Activated T-helper 2 cell treated with anti-CD3 and anti-CD28 coated beads, Interferon-gamma antibody, Interleukin-2, Interleukin-4, amounts not matched to agents 10 μg/mL and 5 μg/mL and 100 μg/mL, durations not matched to agents 14 hours and 24 hours and 36 hours (primary cell): ENCODE measurements at regions of chrX and their contacts with region 1.

Region 1: GRCh38 chrX:72238721-72239475 is at the start of gene ERCC6L:
- DNase-seq: peak; percentile 81
- H3K4me3 Mint-ChIP-seq: peak within 1 kb of the TSS; percentile 84
- H3K27ac Mint-ChIP-seq: peak within 1 kb of the TSS; percentile 60
- H3K4me1 Mint-ChIP-seq: peaks cover 19% of the 10 kb centered on the region
- H3K27me3 Mint-ChIP-seq: no peaks in the 10 kb centered on the region
- total RNA-seq, gene ERCC6L: 9.1 and 9.6 TPM in 2 replicates

Region 2: DNA sequence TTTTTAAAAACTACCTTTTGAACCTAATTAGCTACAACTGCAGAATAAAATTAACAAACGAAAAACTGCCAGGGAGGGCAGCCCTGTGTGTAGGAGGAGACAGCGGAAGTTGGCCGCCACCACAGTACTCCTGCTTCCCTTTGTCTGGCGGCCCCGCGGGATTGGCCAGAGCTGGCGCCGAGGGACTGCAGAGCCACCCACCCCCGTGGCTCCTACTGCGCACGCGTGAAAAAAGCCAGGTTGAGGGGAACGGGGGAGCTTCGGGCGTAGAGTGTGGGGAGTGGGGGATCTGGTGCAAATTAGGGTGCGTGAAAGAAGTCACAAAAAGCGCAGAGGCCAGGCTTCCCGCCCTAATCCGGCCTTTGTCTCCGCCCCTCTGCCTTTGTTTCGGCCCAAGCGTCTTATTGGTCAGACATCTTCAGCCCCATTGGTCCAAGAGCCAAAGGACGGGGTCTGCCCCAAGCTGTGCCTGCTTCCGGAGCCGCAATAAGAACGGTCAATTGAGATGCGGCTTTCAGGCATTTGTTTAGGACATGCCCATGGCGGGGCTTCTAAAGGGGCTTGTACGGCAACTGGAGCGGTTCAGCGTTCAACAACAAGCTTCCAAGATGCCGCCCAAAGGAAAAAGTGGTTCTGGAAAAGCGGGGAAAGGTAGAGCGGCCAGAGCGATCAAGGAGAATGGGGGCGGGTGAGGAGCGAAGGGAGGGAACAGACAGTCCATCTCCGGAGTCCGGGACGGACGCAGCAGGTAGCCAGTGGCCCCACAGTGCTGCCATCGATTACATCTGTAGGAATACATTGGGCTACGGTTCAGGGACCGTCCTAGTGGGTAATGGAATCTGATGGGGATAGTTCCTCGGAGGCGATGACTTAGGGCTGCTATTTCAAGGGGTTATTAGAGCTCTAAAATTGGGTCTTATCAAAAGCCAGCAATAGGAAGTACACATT is 57.4 kb before region 1 on chrX and contains the start of gene PIN4:
- intact Hi-C with region 1: loop called (anchors 2 kb)
- DNase-seq: peak; percentile 77
- H3K4me3 Mint-ChIP-seq: no peak within 1 kb of the TSS
- H3K27ac Mint-ChIP-seq: no peak within 1 kb of the TSS
- H3K4me1 Mint-ChIP-seq: peaks cover 2% of the 10 kb centered on the region
- H3K27me3 Mint-ChIP-seq: no peaks in the 10 kb centered on the region
- total RNA-seq, gene PIN4: 13.5 and 16.8 TPM in 2 replicates

Region 3: DNA sequence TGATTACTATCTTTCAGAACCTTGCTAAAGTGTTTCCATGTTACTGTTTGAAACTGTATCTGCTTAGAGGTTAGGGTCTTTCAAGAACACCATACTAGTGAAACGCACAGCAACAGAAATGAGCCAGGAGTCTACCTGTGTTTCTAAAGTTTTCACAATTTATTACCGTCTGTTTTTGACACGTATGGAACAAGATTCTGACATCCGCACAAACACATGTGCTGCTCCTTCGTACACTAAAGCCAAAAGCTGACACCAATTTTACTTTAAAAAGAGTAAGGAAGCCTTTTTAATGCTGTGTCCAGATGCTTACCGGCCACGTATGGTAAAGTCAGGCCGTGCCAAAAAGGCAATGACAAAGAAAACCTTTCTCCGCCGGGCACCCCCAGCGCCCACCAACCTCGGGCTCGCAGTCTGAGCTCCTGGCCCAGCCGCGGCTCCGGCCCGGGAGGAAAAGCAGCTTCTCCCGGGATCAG is 37.6 kb after region 1 on chrX:
- intact Hi-C with region 1: loop called (anchors 2 kb)
- DNase-seq: no peak
- H3K4me3 Mint-ChIP-seq: peak overlapping the region; percentile 84
- H3K27ac Mint-ChIP-seq: peak overlapping the region; percentile 82
- H3K4me1 Mint-ChIP-seq: peaks cover 36% of the 10 kb centered on the region
- H3K27me3 Mint-ChIP-seq: peaks cover 15% of the 10 kb centered on the region